ENCODE measurements at regions of chr1 and their contacts with region 1.

Region 1: GRCh38 chr1:211680752-211681327 is 5.4 kb upstream of the NEK2 start:
- DNase-seq: peak; percentile 85
- ATAC-seq: peak; percentile 90
- H3K4me3 Mint-ChIP-seq: no peak overlapping the region
- H3K27ac Mint-ChIP-seq: peak overlapping the region; percentile 11
- H3K4me1 Mint-ChIP-seq: peaks cover 13% of the 10 kb centered on the region
- H3K27me3 Mint-ChIP-seq: peaks cover 3% of the 10 kb centered on the region

Region 2: GRCh38 chr1:211667065-211667617 is 13.7 kb before region 1 on chr1:
- CTCF ChIA-PET with region 1: interaction called, 13 read pairs
- POLR2A ChIA-PET with region 1: no interaction called
- DNase-seq: no peak
- ATAC-seq: no peak
- H3K4me3 Mint-ChIP-seq: no peak overlapping the region
- H3K27ac Mint-ChIP-seq: no peak overlapping the region
- H3K4me1 Mint-ChIP-seq: peaks cover 2% of the 10 kb centered on the region
- H3K27me3 Mint-ChIP-seq: no peaks in the 10 kb centered on the region

Region 3: GRCh38 chr1:211939876-211940468 is 259.1 kb after region 1 on chr1:
- CTCF ChIA-PET with region 1: interaction called, 11 read pairs
- POLR2A ChIA-PET with region 1: no interaction called
- DNase-seq: peak; percentile 37
- ATAC-seq: peak; percentile 21
- H3K4me3 Mint-ChIP-seq: no peak overlapping the region
- H3K27ac Mint-ChIP-seq: no peak overlapping the region
- H3K4me1 Mint-ChIP-seq: peaks cover 43% of the 10 kb centered on the region
- H3K27me3 Mint-ChIP-seq: no peaks in the 10 kb centered on the region

Region 4: GRCh38 chr1:212062832-212063438 is 382.1 kb after region 1 on chr1:
- CTCF ChIA-PET with region 1: interaction called, 14 read pairs
- POLR2A ChIA-PET with region 1: no interaction called
- DNase-seq: no peak
- ATAC-seq: peak; percentile 60
- H3K4me3 Mint-ChIP-seq: no peak overlapping the region
- H3K27ac Mint-ChIP-seq: no peak overlapping the region
- H3K4me1 Mint-ChIP-seq: peaks cover 3% of the 10 kb centered on the region
- H3K27me3 Mint-ChIP-seq: no peaks in the 10 kb centered on the region

Region 5: DNA sequence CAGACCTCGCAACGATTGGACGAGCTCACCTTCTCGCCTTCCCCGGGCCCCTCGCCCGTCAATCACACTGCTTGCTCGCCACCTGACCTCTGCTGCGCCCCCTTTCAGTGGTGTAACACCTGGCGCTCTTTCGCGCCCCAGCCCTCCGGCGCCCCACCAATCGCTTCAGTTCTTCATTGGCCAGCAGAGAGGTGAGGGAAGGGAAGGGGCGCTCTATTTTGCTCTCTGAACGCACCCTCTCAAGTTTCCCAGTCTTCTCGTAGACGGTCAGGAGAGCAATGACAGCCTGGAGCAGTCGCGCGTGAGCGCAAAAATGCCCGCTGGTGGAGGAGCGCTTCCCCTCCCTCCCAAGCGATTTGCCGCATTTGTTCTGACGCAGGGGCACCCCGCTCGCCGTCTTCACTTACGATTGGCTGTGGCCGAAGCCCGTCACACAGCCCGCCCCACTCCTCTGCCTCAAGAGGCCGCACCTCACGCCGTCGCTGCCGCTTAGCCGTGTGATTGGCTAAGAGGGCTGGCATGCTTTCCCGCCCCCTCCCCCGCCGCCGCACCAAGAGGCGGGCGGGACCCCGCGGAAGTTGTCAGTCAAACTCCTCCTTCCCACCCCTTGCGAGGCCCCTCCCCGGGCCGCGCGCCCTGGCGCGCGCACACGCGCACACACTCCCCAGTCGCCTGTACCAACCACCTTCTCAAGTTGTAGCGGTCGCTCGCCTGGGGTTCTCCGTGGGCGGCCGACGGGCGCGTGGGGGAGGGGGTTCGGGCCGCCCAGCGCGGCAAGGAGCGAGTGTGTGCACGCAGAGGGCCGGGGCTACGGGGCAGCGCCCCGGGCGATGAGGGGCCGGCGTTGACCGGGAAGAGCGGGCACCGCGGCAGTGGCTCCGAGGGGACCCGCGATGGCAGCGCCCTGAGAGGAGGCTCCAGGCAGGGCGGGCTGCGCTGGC is 604.2 kb after region 1 on chr1 and contains the start of gene PPP2R5A:
- CTCF ChIA-PET with region 1: interaction called, 15 read pairs
- POLR2A ChIA-PET with region 1: no interaction called
- DNase-seq: peak; percentile 99
- ATAC-seq: peak; percentile 94
- H3K4me3 Mint-ChIP-seq: peak within 1 kb of the TSS; percentile 99
- H3K27ac Mint-ChIP-seq: peak within 1 kb of the TSS; percentile 99
- H3K4me1 Mint-ChIP-seq: peaks cover 37% of the 10 kb centered on the region
- H3K27me3 Mint-ChIP-seq: no peaks in the 10 kb centered on the region
- total RNA-seq, gene PPP2R5A: 66.7 to 72.3 TPM